IMR-90 (cell line): ENCODE measurements at regions of chr5 and their contacts with region 1.

Region 1: GRCh38 chr5:157718519-157718918 is 12.7 kb upstream of the THG1L start:
- DNase-seq: peak; percentile 77
- ATAC-seq: peak; percentile 99
- H3K4me3 ChIP-seq: no peak overlapping the region
- H3K27ac ChIP-seq: no peak overlapping the region
- H3K4me1 ChIP-seq: peaks cover 2% of the 10 kb centered on the region; the same call in 1 of the 2 replicates
- H3K27me3 ChIP-seq: no peaks in the 10 kb centered on the region
- CTCF ChIP-seq: peak; percentile 83
- POLR2A ChIP-seq: peak; percentile 24; the same call in 1 of the 2 replicates
- RAD21 ChIP-seq: peak; percentile 91

Region 2: GRCh38 chr5:157328277-157328912 is 390.1 kb before region 1 on chr5:
- CTCF ChIA-PET with region 1: interaction called, 3 read pairs
- POLR2A ChIA-PET with region 1: no interaction called
- dilution Hi-C with region 1: no loop called
- in situ Hi-C with region 1: no loop called
- intact Hi-C with region 1: loop called (anchors 1 kb)
- DNase-seq: peak; percentile 81
- ATAC-seq: peak; percentile 100
- H3K4me3 ChIP-seq: peak overlapping the region; percentile 13; the same call in 1 of the 2 replicates
- H3K27ac ChIP-seq: no peak overlapping the region
- H3K4me1 ChIP-seq: no peaks in the 10 kb centered on the region
- H3K27me3 ChIP-seq: no peaks in the 10 kb centered on the region
- CTCF ChIP-seq: peak; percentile 97
- POLR2A ChIP-seq: peak; percentile 41; the same call in 1 of the 2 replicates
- RAD21 ChIP-seq: peak; percentile 98

Region 3: GRCh38 chr5:157354800-157355199 is 363.7 kb before region 1 on chr5:
- CTCF ChIA-PET with region 1: no interaction called
- POLR2A ChIA-PET with region 1: no interaction called
- dilution Hi-C with region 1: no loop called
- in situ Hi-C with region 1: loop called (anchors 10 kb)
- intact Hi-C with region 1: no loop called
- DNase-seq: no peak
- ATAC-seq: peak; percentile 57
- H3K4me3 ChIP-seq: no peak overlapping the region
- H3K27ac ChIP-seq: no peak overlapping the region
- H3K4me1 ChIP-seq: no peaks in the 10 kb centered on the region
- H3K27me3 ChIP-seq: no peaks in the 10 kb centered on the region
- CTCF ChIP-seq: peak; percentile 30
- POLR2A ChIP-seq: no peak
- RAD21 ChIP-seq: peak; percentile 7; the same call in 1 of the 2 replicates

Region 4: DNA sequence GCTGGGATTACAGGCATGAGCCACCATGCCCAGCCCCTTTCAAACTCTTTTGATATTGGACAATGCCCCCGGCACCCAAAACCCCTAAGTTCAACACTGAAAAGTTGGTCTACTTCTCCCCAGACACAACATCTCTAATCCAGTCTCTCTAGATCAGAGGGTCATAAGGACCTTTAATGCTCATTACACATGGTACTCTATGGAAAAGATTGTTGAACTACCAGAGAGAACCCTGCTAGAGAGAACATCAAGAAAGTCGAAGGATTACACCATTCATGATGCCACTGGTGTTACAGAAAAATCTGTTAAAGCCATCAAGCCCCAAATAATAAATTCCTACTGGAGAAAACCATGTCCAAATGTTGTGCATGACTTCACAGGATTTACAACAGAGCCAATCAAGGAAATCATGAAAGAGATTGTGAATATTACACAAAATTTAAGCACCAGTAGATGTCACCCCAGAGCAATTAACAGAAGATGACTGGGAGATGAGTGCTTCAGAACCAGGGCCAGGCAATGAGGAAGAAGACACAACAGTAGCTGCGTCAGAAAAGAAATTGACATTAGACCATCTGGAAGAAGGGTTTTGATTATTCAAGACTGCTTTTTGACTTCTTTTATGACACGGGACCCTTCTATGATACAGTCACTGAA is 286.8 kb before region 1 on chr5:
- CTCF ChIA-PET with region 1: no interaction called
- POLR2A ChIA-PET with region 1: no interaction called
- dilution Hi-C with region 1: no loop called
- in situ Hi-C with region 1: no loop called
- intact Hi-C with region 1: loop called (anchors 1 kb)
- DNase-seq: peak; percentile 69
- ATAC-seq: peak; percentile 98
- H3K4me3 ChIP-seq: no peak overlapping the region
- H3K27ac ChIP-seq: no peak overlapping the region
- H3K4me1 ChIP-seq: no peaks in the 10 kb centered on the region
- H3K27me3 ChIP-seq: no peaks in the 10 kb centered on the region
- CTCF ChIP-seq: peak; percentile 59
- POLR2A ChIP-seq: no peak
- RAD21 ChIP-seq: peak; percentile 65

Region 5: DNA sequence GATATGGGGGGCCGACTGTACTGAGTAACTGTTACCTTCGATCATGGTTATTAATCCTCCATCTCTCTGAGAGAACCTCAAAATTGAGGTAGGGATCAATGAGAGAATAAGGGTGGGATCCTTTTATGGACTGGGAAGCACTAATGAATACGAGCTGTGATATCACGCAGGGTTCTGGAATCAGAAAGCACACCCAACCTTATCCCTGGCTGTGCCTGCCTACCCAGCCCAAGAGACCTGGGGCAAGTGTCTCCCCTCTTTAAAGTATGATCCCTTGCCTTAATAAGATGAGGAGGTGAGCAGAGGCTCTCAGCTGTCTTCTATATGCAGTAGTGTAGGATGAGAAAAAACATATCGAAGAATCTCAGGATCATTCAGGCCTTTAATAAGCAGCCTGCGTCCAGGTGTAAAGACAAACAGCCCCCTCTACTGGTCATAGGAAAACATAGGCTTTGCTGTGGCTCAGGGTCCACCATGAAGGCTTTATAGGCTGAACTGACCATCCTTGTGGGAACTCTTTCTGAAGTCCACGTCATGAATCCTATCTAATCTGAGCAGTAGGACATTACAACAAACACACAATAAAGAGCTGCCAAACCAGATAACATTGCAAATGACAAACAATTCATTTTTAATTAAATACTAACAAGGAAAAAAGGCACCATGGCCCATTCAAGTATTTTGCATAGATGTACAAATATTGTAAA is 241.7 kb before region 1 on chr5:
- CTCF ChIA-PET with region 1: interaction called, 3 read pairs
- POLR2A ChIA-PET with region 1: no interaction called
- dilution Hi-C with region 1: no loop called
- in situ Hi-C with region 1: no loop called
- intact Hi-C with region 1: loop called (anchors 1 kb)
- DNase-seq: peak; percentile 74
- ATAC-seq: peak; percentile 76
- H3K4me3 ChIP-seq: no peak overlapping the region
- H3K27ac ChIP-seq: no peak overlapping the region
- H3K4me1 ChIP-seq: peaks cover 9% of the 10 kb centered on the region; the same call in 1 of the 2 replicates
- H3K27me3 ChIP-seq: no peaks in the 10 kb centered on the region
- CTCF ChIP-seq: peak; percentile 88
- POLR2A ChIP-seq: 0 out of 2 replicates have a peak, but pooled peaks have one; percentile 34
- RAD21 ChIP-seq: peak; percentile 87

Region 6: DNA sequence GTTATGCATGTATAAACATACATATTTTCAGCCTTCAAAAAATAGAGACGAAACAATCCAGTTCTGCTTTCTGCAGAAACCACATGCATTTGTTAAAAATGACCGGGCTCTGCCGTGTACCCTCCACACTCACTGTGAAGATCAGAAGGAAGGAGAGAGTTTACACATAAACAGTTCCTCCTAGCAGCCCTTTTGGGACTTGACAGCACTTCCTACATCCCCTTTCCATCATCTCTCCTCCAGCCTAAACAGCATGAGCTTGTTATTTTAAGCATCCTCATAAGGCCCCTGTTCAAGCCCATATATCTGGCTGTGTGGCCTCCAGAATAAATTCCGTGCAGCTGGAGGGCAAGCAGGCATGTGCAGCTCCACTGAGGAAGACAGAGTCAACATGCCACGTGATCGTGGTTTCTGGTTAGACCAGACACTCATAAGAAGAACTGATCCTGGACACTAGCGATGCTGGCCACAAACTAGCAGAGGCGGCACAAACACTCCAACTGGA is 216.3 kb before region 1 on chr5:
- CTCF ChIA-PET with region 1: no interaction called
- POLR2A ChIA-PET with region 1: no interaction called
- dilution Hi-C with region 1: no loop called
- in situ Hi-C with region 1: loop called (anchors 10 kb)
- intact Hi-C with region 1: loop called (anchors 10 kb)
- DNase-seq: peak; percentile 49
- ATAC-seq: peak; percentile 66
- H3K4me3 ChIP-seq: no peak overlapping the region
- H3K27ac ChIP-seq: peak overlapping the region; percentile 11; the same call in 1 of the 2 replicates
- H3K4me1 ChIP-seq: peaks cover 7% of the 10 kb centered on the region
- H3K27me3 ChIP-seq: no peaks in the 10 kb centered on the region
- CTCF ChIP-seq: no peak
- POLR2A ChIP-seq: no peak
- RAD21 ChIP-seq: no peak

Region 7: GRCh38 chr5:157575381-157576020 is 143.0 kb before region 1 on chr5 and contains the start of gene ADAM19:
- CTCF ChIA-PET with region 1: no interaction called
- POLR2A ChIA-PET with region 1: interaction called, 9 read pairs
- dilution Hi-C with region 1: no loop called
- in situ Hi-C with region 1: no loop called
- intact Hi-C with region 1: loop called (anchors 5 kb)
- DNase-seq: peak; percentile 53
- ATAC-seq: peak; percentile 84
- H3K4me3 ChIP-seq: peak within 1 kb of the TSS; percentile 80
- H3K27ac ChIP-seq: peak within 1 kb of the TSS; percentile 86
- H3K4me1 ChIP-seq: peaks cover 13% of the 10 kb centered on the region
- H3K27me3 ChIP-seq: no peaks in the 10 kb centered on the region
- CTCF ChIP-seq: no peak
- POLR2A ChIP-seq: peak; percentile 56
- RAD21 ChIP-seq: peak; percentile 3; the same call in 1 of the 2 replicates
- total RNA-seq, gene ADAM19: 35.5 and 38.3 TPM in 2 replicates